CD4-positive, alpha-beta memory T cell (primary cell): ENCODE measurements at regions of chr5 and their contacts with region 1.

Region 1: GRCh38 chr5:83076742-83077661 is at the starts of genes TMEM167A and XRCC4:
- DNase-seq: peak; percentile 92 to 98 (median 95)
- H3K4me3 ChIP-seq: peak within 1 kb of the TSS; percentile 82 to 94
- H3K4me3 Mint-ChIP-seq: peak within 1 kb of the TSS; percentile 95 to 99 (median 98)
- H3K27ac ChIP-seq: peak within 1 kb of the TSS; percentile 85
- H3K27ac Mint-ChIP-seq: peak within 1 kb of the TSS; percentile 91 to 99 (median 98)
- H3K4me1 ChIP-seq: peaks cover 53% of the 10 kb centered on the region
- H3K4me1 Mint-ChIP-seq: peaks cover 40 to 67% (median 53%) of the 10 kb centered on the region in 4 donors
- H3K27me3 ChIP-seq: no peaks in the 10 kb centered on the region
- H3K27me3 Mint-ChIP-seq: no peaks in the 10 kb centered on the region
- total RNA-seq, gene TMEM167A: 44.6 to 47.9 TPM
- total RNA-seq, gene XRCC4: 4.1 to 4.2 TPM

Region 2: GRCh38 chr5:81971712-81972495 is 1105.1 kb before region 1 on chr5 and contains the start of gene ATG10:
- CTCF ChIA-PET with region 1: no interaction called
- POLR2A ChIA-PET with region 1: no interaction called
- intact Hi-C with region 1: loop called (anchors 5 kb)
- DNase-seq: peak; percentile 80 to 88 (median 86)
- H3K4me3 ChIP-seq: peak within 1 kb of the TSS; percentile 88 to 94
- H3K4me3 Mint-ChIP-seq: peak within 1 kb of the TSS; percentile 87 to 100 (median 98)
- H3K27ac ChIP-seq: peak within 1 kb of the TSS; percentile 93
- H3K27ac Mint-ChIP-seq: peak within 1 kb of the TSS; percentile 96 to 100 (median 99)
- H3K4me1 ChIP-seq: peaks cover 24% of the 10 kb centered on the region
- H3K4me1 Mint-ChIP-seq: peaks cover 8 to 31% (median 22%) of the 10 kb centered on the region in 4 donors
- H3K27me3 ChIP-seq: no peaks in the 10 kb centered on the region
- H3K27me3 Mint-ChIP-seq: no peaks in the 10 kb centered on the region
- total RNA-seq, gene ATG10: 7.5 to 7.9 TPM

Region 3: GRCh38 chr5:82278095-82278918 is 798.7 kb before region 1 on chr5 and contains the start of gene RPS23:
- CTCF ChIA-PET with region 1: no interaction called
- POLR2A ChIA-PET with region 1: interaction called, 8 read pairs
- intact Hi-C with region 1: loop called (anchors 1 kb)
- DNase-seq: peak; percentile 86 to 89 (median 88)
- H3K4me3 ChIP-seq: peak within 1 kb of the TSS; percentile 84 to 93
- H3K4me3 Mint-ChIP-seq: peak within 1 kb of the TSS; percentile 86 to 99 (median 96)
- H3K27ac ChIP-seq: peak within 1 kb of the TSS; percentile 79
- H3K27ac Mint-ChIP-seq: peak within 1 kb of the TSS; percentile 94 to 99 (median 98)
- H3K4me1 ChIP-seq: peaks cover 23% of the 10 kb centered on the region
- H3K4me1 Mint-ChIP-seq: peaks cover 15 to 48% (median 30%) of the 10 kb centered on the region in 4 donors
- H3K27me3 ChIP-seq: no peaks in the 10 kb centered on the region
- H3K27me3 Mint-ChIP-seq: no peaks in the 10 kb centered on the region
- total RNA-seq, gene RPS23: 2,959 to 3,147 TPM

Region 4: GRCh38 chr5:82356808-82357671 is 720.0 kb before region 1 on chr5:
- CTCF ChIA-PET with region 1: no interaction called
- POLR2A ChIA-PET with region 1: interaction called, 4 read pairs
- intact Hi-C with region 1: loop called (anchors 1 kb)
- DNase-seq: peak; percentile 83 to 96 (median 90)
- H3K4me3 ChIP-seq: peak overlapping the region; percentile 4 to 39
- H3K4me3 Mint-ChIP-seq: peak overlapping the region; percentile 76 to 89 (median 85)
- H3K27ac ChIP-seq: peak overlapping the region; percentile 62
- H3K27ac Mint-ChIP-seq: peak overlapping the region; percentile 97 to 98 (median 98)
- H3K4me1 ChIP-seq: peaks cover 34% of the 10 kb centered on the region
- H3K4me1 Mint-ChIP-seq: peaks cover 22 to 42% (median 32%) of the 10 kb centered on the region in 4 donors
- H3K27me3 ChIP-seq: no peaks in the 10 kb centered on the region
- H3K27me3 Mint-ChIP-seq: no peaks in the 10 kb centered on the region

Region 5: DNA sequence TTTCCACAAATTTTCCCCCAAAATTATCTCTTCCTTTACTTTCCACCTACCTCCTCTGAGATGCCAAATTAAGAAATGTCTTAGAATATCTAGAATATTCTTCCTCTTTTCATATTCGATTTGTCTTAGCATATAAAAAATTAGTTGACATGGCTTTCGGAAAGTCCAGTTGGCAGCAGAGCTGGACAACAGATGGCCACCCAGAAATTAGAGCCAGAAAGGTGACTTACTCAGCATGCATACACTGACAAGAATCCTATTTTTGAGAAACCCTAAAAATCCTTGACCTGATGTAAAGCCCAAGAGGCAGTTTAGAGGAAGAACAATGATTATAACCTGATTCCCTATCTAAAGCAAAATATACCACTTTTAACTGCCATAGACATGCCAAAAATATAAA is 21.8 kb before region 1 on chr5:
- CTCF ChIA-PET with region 1: no interaction called
- POLR2A ChIA-PET with region 1: no interaction called
- intact Hi-C with region 1: no loop called
- DNase-seq: no peak
- H3K4me3 ChIP-seq: no peak overlapping the region
- H3K4me3 Mint-ChIP-seq: no peak overlapping the region
- H3K27ac ChIP-seq: no peak overlapping the region
- H3K27ac Mint-ChIP-seq: peak overlapping the region in 2 of 7 donors; percentile 19 to 52
- H3K4me1 ChIP-seq: no peaks in the 10 kb centered on the region
- H3K4me1 Mint-ChIP-seq: peaks cover 7 to 23% (median 14%) of the 10 kb centered on the region in 4 donors
- H3K27me3 ChIP-seq: no peaks in the 10 kb centered on the region
- H3K27me3 Mint-ChIP-seq: no peaks in the 10 kb centered on the region

Region 6: DNA sequence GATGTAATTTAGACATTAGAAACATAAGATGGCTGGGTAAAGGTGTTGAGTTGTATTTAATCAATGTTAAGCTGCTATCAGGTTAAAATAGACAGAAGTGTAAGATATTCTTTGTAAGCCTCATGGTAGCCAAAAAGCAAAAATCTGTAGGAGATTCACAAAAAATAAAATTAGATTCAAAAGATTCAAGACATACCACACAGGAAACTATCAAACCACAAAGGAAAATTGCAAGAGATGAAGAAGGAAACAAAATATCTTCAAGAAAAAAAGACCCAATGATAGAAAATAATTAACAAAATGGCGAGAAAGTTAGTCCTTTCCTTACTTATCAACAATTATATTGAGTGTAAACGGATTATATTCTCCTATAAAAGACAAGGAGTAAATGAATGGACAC is 15.6 kb after region 1 on chr5:
- CTCF ChIA-PET with region 1: interaction called, 3 read pairs
- POLR2A ChIA-PET with region 1: interaction called, 9 read pairs
- intact Hi-C with region 1: loop called (anchors 1 kb)
- DNase-seq: peak in 3 of 5 donors; percentile 19 to 21 (median 19)
- H3K4me3 ChIP-seq: no peak overlapping the region
- H3K4me3 Mint-ChIP-seq: peak overlapping the region; percentile 33 to 84 (median 60)
- H3K27ac ChIP-seq: no peak overlapping the region
- H3K27ac Mint-ChIP-seq: peak overlapping the region in 6 of 7 donors; percentile 3 to 68 (median 52)
- H3K4me1 ChIP-seq: peaks cover 22% of the 10 kb centered on the region
- H3K4me1 Mint-ChIP-seq: peaks cover 18 to 44% (median 27%) of the 10 kb centered on the region in 4 donors
- H3K27me3 ChIP-seq: no peaks in the 10 kb centered on the region
- H3K27me3 Mint-ChIP-seq: no peaks in the 10 kb centered on the region

Region 7: DNA sequence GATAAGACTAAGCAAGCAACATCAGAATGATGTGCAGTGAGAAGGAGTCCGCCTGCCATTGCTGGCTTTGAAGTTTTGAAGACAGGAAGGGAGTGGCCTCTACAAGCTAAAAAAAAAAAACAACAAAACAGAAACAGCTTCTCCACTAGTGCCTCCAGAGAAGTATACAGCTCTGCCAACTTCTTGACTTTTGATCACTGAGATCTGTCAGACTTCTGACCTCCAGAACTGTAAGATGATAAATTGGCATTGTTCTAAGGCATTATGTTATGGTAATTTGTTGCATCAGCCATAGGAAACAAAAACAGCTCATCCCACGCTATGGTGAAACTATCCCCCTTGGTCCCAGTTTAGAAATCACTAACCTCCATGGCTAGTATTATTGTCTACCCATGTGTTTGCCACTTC is 263.5 kb after region 1 on chr5:
- CTCF ChIA-PET with region 1: no interaction called
- POLR2A ChIA-PET with region 1: interaction called, 3 read pairs
- intact Hi-C with region 1: loop called (anchors 5 kb)
- DNase-seq: peak in 4 of 5 donors; percentile 48 to 61 (median 54)
- H3K4me3 ChIP-seq: peak overlapping the region in 1 of 2 donors; percentile 6
- H3K4me3 Mint-ChIP-seq: peak overlapping the region; percentile 36 to 79 (median 68)
- H3K27ac ChIP-seq: peak overlapping the region; percentile 13
- H3K27ac Mint-ChIP-seq: peak overlapping the region; percentile 68 to 93 (median 87)
- H3K4me1 ChIP-seq: peaks cover 23% of the 10 kb centered on the region
- H3K4me1 Mint-ChIP-seq: peaks cover 20 to 24% (median 21%) of the 10 kb centered on the region in 4 donors
- H3K27me3 ChIP-seq: no peaks in the 10 kb centered on the region
- H3K27me3 Mint-ChIP-seq: no peaks in the 10 kb centered on the region

Region 8: DNA sequence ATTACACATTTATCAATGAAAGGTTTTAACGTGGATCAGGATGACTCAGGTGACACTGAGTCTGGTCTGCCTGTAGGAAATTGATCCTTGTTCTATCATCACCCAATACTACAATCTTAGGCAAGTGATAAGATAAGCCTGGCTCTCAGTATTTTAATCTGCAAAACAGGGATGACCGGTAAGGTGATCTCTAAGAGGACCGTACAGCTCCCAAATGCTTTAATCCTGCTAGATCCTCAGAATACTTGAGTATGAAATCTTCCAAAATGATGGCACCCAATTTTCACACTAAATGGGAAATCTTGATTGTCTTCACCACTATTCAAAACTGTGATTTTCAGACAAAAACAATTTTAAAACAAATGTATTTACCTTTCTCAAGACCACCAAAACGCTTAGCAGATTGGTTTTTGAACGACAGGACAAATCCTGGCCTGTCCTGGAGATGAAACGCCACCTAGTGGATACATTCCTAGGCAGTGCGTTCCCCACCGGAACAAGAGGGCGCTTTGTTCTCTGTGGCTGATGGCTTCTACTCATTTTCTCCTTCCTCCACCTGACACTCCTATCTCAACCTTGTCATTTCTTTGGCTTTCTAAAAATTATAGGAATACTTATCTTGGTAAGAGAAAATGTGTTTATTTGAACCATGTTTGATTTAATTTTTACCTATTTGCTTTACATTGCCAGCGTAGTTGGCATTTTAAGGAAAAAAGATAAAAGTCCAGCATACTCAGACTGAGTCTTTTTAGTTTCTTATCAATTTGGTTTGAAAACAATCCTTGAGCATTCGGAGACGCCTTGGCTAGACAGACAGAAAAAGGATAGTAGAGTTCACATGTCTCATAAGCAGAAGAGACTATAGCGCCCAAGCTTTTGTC is 353.4 kb after region 1 on chr5:
- CTCF ChIA-PET with region 1: no interaction called
- POLR2A ChIA-PET with region 1: no interaction called
- intact Hi-C with region 1: loop called (anchors 1 kb)
- DNase-seq: peak; percentile 45 to 58 (median 52)
- H3K4me3 ChIP-seq: no peak overlapping the region
- H3K4me3 Mint-ChIP-seq: no peak overlapping the region
- H3K27ac ChIP-seq: no peak overlapping the region
- H3K27ac Mint-ChIP-seq: no peak overlapping the region
- H3K4me1 ChIP-seq: no peaks in the 10 kb centered on the region
- H3K4me1 Mint-ChIP-seq: no peaks in the 10 kb centered on the region
- H3K27me3 ChIP-seq: no peaks in the 10 kb centered on the region
- H3K27me3 Mint-ChIP-seq: peaks cover 0 to 2% of the 10 kb centered on the region in 2 donors